ENCODE measurements at regions of chr2 and their contacts with region 1.

Region 1: DNA sequence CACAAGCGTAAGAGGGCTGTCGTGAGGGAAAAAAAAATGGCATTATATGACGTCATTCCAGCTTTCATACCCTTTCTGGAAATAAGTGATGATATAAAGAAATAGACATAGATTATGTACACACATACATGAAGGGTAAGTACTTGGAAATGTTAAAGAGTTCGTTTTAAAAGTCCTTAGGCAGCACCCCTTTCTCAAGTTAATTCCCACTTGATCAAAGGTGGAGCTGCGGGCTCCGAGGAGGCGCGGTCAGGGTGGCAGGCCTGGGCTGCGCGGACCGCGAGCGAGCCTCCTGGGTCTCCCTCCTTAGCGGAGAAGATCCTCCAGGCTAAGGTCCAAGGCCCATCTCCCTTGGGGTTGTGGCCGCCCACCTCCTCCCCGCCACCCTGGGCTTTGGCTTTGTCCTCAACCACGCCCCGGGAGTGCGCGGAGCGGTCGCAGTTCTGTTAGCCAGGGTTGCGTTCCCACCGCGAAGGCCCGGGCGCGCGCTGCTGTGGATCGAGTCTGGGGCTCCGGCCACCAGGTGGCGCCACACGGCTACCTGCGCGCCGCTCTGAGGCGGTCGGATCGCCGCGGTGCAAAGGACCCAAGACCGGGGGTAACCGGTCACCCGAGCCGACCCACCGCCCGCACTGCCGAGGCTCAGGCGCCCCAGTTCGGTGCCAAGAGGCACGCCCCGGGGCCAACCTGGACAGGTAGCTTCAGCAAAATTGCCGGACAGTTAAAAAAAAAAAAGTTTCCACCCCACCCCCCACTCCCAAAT is 66.8 kb downstream of the HNRNPLL start:
- DNase-seq: peak; percentile 57 to 87 (median 78)
- ATAC-seq: peak; percentile 94
- H3K4me3 ChIP-seq: peak overlapping the region; percentile 47 to 48
- H3K4me3 Mint-ChIP-seq: peak overlapping the region; percentile 57
- H3K27ac ChIP-seq: no peak overlapping the region
- H3K27ac Mint-ChIP-seq: no peak overlapping the region
- H3K4me1 ChIP-seq: peaks cover 7% of the 10 kb centered on the region
- H3K4me1 Mint-ChIP-seq: peaks cover 6% of the 10 kb centered on the region
- H3K27me3 ChIP-seq: no peaks in the 10 kb centered on the region
- H3K27me3 Mint-ChIP-seq: peaks cover 14% of the 10 kb centered on the region
- CTCF ChIP-seq: peak; percentile 88

Region 2: GRCh38 chr2:38141501-38141900 is 394.4 kb before region 1 on chr2:
- CTCF ChIA-PET with region 1: no interaction called
- POLR2A ChIA-PET with region 1: no interaction called
- intact Hi-C with region 1: no loop called
- DNase-seq: no peak
- ATAC-seq: no peak
- H3K4me3 ChIP-seq: no peak overlapping the region
- H3K4me3 Mint-ChIP-seq: no peak overlapping the region
- H3K27ac ChIP-seq: no peak overlapping the region
- H3K27ac Mint-ChIP-seq: no peak overlapping the region
- H3K4me1 ChIP-seq: no peaks in the 10 kb centered on the region
- H3K4me1 Mint-ChIP-seq: no peaks in the 10 kb centered on the region
- H3K27me3 ChIP-seq: no peaks in the 10 kb centered on the region
- H3K27me3 Mint-ChIP-seq: no peaks in the 10 kb centered on the region
- CTCF ChIP-seq: no peak

Region 3: DNA sequence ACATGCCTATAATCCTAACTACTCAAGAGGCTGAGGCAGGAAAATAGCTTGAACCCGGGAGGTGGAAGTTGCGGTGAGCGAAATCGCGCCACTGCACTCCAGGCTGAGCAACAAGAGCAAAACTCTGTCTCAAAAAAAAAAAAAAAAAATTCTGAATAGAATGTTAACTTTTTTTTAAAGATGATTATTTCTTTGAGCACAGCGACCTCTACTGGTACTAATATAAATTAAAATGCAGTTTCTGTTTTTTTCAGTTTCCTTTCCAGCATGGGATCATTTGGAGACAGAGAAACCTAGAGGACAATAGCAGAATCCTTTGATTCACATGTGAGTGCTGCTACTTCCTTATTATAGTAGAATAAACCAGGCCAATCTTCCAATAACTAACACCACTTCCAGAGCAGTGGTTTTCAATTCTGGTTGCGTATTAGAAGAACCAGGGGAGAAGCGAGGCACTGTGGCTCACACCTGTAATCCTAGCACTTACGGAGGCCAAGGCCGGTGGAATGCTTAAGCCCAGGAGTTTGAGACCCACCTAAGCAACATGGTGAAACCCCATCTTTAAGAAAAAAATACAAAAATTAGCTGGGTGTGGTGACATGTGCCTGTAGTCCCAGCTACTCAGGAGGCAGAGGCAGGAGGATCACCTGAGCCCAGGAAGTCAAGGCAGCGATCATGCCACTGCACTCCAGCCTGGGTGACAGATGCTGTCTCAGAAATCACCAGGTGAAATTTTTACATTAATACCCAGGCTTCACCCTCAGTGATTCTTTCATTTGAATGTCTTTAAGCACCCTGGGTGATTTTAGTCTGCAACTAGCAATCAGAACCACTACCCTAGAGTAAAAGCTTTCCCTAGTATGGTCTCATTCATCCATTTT is 205.2 kb after region 1 on chr2:
- CTCF ChIA-PET with region 1: interaction called, 26 read pairs
- POLR2A ChIA-PET with region 1: interaction called, 3 read pairs
- intact Hi-C with region 1: loop called (anchors 1 kb)
- DNase-seq: peak in 3 of 9 experiments; percentile 48 to 73 (median 62)
- ATAC-seq: peak; percentile 22
- H3K4me3 ChIP-seq: no peak overlapping the region
- H3K4me3 Mint-ChIP-seq: no peak overlapping the region
- H3K27ac ChIP-seq: peak overlapping the region in 1 of 2 experiments; percentile 21
- H3K27ac Mint-ChIP-seq: peak overlapping the region; percentile 69
- H3K4me1 ChIP-seq: peaks cover 19% of the 10 kb centered on the region
- H3K4me1 Mint-ChIP-seq: peaks cover 43% of the 10 kb centered on the region
- H3K27me3 ChIP-seq: no peaks in the 10 kb centered on the region
- H3K27me3 Mint-ChIP-seq: no peaks in the 10 kb centered on the region
- CTCF ChIP-seq: peak; percentile 72

Region 4: DNA sequence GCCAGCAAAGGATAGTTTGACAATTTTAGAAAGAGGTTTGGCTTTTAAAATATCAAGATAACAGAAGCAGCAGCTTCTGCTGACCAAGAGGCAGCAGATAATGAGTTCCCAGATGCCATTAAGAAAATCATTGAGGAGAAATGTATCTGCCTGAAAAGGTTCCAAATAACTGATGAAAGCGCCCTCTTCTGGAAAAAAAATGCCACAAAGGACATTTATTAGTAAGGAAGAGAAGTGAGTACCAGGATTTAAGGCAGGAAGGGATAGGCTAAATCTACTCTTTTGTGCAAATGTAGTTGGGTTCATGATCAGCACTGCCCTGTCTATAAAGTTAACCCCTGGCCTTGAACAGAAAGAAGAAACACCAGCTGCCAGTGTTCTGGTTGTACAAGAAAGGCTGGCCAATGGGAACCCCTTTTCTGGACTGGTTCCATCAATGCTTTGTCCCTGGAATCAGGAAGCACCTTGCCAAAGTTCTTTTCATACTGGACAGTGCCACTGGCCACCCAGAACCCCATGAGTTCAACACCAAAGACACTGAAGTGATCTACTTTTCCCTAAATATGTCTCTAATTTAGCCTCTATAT is 299.2 kb after region 1 on chr2:
- CTCF ChIA-PET with region 1: no interaction called
- POLR2A ChIA-PET with region 1: no interaction called
- intact Hi-C with region 1: loop called in 1 of 2 experiments (anchors 5 kb)
- DNase-seq: peak in 2 of 9 experiments; percentile 17 to 41
- ATAC-seq: no peak
- H3K4me3 ChIP-seq: no peak overlapping the region
- H3K4me3 Mint-ChIP-seq: no peak overlapping the region
- H3K27ac ChIP-seq: no peak overlapping the region
- H3K27ac Mint-ChIP-seq: no peak overlapping the region
- H3K4me1 ChIP-seq: no peaks in the 10 kb centered on the region
- H3K4me1 Mint-ChIP-seq: no peaks in the 10 kb centered on the region
- H3K27me3 ChIP-seq: no peaks in the 10 kb centered on the region
- H3K27me3 Mint-ChIP-seq: no peaks in the 10 kb centered on the region
- CTCF ChIP-seq: no peak